ENCODE measurements at regions of chrX and their contacts with region 1.

Region 1: DNA sequence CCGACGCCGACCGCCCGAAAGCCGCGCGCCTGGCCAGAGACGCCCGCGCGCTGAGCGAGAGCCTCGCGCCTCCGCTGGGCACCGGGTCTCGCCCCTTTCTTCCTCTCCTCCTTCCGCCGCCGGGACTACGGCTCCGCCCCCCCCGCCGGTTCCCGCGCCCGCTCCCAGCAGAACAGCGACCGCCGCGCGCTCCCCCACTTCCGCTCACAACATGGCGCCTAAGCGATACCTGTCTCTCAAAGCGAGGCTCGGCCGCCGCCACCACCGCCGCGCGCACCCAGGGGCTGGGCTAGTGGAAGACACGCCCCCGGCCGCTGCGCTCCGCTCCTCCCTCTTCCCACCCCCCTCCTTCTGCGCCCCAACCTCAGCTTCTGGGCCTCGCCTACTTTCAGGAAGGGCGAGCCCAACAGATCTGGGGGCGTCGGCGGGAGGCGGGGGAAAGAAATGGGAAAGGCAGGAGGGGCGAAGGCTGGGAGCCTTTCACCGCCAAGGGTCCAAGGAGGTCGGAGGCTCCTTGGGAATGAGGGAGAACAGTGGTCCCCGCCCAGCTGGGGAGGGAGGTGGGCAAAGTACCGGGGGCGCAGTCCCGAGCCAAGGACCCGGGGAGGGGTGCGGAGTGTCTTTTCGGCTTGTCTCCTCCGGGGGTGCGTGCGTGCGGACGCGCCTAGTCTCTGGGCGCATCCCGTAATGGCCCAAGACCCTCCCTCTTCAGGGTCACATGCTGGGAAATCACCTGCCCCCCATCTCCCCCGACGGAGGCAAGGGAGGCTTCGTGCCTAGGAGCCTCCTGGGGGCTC is at the start of gene RPS6KA3:
- DNase-seq: peak; percentile 97
- total RNA-seq, gene RPS6KA3: 36.4 to 52.3 TPM

Region 2: GRCh38 chrX:18797141-18797540 is 1469.9 kb before region 1 on chrX:
- intact Hi-C with region 1: loop called in 1 of 2 experiments (anchors 5 kb)
- DNase-seq: no peak

Region 3: DNA sequence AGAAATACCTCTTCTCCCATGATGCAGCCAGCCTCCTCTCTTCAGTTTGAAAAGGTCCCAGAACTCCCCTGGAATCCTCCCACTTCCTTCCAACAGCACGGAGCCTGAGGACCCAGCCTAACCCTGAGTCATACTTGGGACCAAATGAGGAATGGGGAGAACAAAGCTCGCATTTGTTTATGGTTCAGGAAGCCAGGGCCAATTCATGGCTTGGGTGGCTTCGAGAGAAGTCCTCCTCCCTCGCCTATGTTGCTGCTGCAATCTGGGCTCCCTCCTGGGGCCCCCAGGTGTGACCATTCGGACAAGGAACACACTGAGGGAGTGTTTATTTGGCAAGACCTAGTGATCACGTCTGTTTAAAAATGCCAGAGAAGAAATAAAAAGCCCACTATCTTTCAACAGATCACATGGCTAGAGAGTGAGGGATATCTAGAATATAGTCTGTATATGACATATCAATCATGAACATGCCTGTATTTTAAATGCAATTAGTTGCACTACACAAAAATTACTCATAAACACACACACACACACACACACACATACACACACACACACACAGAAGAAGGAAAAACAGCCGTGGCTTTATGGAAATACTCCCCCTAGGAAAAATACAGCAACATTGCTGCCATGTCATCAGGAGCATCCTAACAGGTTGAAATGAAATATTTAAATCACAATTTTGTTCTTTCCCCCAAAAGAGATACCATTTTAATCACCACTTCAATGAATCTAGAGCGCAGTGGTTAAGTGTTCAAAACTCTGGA is 596.0 kb before region 1 on chrX:
- intact Hi-C with region 1: no loop called
- DNase-seq: no peak

Region 4: DNA sequence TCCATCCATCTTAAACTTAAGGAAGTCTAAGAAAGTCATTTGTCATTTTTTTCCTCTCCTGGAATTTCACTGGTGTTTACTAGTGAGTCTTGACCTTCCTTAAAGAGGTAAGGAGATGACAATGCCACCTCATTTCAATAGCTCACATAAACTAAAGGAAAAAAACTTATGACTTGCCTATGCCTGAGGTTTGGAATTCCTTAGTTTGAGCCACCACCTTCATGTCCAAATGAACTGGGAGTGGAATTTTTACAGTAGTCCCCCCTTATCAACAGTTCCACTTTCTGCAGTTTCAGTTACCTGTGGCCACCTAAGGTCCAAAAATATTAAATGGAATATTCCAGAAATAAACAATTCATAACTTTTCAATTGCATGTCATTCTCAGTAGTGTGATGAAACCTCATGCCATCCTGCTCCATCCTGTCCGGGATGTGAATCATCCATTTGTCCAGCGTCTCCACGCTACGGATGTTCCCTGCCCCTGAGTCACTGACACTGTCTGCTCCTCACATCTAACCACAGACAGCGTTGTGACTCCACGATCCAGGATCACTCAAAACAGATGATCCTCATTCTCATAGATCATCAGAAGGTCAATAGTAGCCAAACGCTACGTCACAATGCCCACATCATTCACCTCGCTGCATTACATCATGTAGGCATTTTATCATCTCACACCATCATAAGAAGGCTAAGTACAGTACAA is 557.0 kb before region 1 on chrX:
- intact Hi-C with region 1: loop called in 1 of 2 experiments (anchors 5 kb)
- DNase-seq: no peak

Measured in posterior vena cava (tissue), 2 donors.